Activated naive CD4-positive, alpha-beta T cell treated with anti-CD3 and anti-CD28 coated beads for 36 hours (primary cell): ENCODE measurements at regions of chr3 and their contacts with region 1.

Region 1: GRCh38 chr3:113531826-113532697 is at the start of gene SIDT1:
- DNase-seq: peak; percentile 82
- H3K4me3 Mint-ChIP-seq: peak within 1 kb of the TSS; percentile 97
- H3K27ac Mint-ChIP-seq: peak within 1 kb of the TSS; percentile 96
- H3K4me1 Mint-ChIP-seq: peaks cover 46% of the 10 kb centered on the region
- H3K27me3 Mint-ChIP-seq: no peaks in the 10 kb centered on the region
- total RNA-seq, gene SIDT1: 14.6 to 14.9 TPM

Region 2: DNA sequence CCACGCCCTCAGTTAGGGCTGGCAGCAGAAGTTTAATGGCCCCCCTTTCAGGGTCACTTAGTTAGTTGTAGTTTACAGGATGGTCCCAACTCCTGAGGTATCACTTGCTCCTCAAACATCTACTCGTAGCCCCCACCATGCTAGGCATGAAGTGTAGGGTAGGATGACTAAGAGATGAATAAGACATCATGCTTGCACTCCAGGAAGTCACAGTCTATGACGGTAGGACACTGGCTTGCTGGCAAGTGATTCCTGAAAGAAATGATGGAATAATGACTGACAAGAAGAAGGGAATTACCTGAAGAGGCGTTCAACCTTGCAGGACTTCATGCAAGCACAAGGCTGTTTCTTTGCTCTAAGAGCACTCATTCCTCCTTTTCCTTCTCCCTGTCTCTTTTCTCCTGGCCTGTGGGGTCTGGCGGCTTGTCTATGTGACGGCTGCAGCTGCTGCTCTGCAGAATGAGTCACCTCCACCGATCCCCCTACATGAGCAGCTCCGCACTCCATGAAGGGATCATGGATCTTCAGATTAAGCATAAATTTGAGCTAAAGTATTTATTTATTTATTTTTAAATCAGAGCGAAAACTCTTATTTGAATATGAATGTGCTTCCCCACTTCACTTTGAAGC is 403.6 kb before region 1 on chr3:
- CTCF ChIA-PET with region 1: no interaction called
- intact Hi-C with region 1: no loop called
- DNase-seq: no peak
- H3K4me3 Mint-ChIP-seq: no peak overlapping the region
- H3K27ac Mint-ChIP-seq: no peak overlapping the region
- H3K4me1 Mint-ChIP-seq: peaks cover 2% of the 10 kb centered on the region
- H3K27me3 Mint-ChIP-seq: no peaks in the 10 kb centered on the region

Region 3: DNA sequence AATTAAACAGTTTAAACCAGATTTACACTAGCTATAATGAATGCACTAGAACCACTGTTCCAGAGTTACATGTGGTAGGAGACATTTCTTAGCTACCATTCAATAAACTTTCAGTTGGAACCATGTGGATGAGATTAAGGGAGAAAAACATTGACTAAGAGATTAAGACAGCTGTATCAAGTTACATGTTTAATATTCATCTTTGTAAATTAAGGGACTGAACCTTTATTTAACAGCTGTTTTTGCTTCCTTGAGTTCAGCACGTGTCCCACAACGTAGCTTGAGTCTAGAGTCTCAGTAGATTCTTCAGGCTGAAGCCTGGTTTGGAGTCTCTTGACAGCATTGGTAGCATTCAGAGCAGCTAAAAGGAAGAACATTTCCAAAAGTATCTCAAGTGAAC is 63.5 kb before region 1 on chr3:
- CTCF ChIA-PET with region 1: no interaction called
- intact Hi-C with region 1: no loop called
- DNase-seq: no peak
- H3K4me3 Mint-ChIP-seq: no peak overlapping the region
- H3K27ac Mint-ChIP-seq: no peak overlapping the region
- H3K4me1 Mint-ChIP-seq: no peaks in the 10 kb centered on the region
- H3K27me3 Mint-ChIP-seq: no peaks in the 10 kb centered on the region

Region 4: GRCh38 chr3:113514265-113514769 is 17.7 kb before region 1 on chr3:
- CTCF ChIA-PET with region 1: interaction called, 4 read pairs
- intact Hi-C with region 1: loop called (anchors 1 kb)
- DNase-seq: no peak
- H3K4me3 Mint-ChIP-seq: no peak overlapping the region
- H3K27ac Mint-ChIP-seq: no peak overlapping the region
- H3K4me1 Mint-ChIP-seq: peaks cover 12% of the 10 kb centered on the region
- H3K27me3 Mint-ChIP-seq: peaks cover 12% of the 10 kb centered on the region

Region 5: DNA sequence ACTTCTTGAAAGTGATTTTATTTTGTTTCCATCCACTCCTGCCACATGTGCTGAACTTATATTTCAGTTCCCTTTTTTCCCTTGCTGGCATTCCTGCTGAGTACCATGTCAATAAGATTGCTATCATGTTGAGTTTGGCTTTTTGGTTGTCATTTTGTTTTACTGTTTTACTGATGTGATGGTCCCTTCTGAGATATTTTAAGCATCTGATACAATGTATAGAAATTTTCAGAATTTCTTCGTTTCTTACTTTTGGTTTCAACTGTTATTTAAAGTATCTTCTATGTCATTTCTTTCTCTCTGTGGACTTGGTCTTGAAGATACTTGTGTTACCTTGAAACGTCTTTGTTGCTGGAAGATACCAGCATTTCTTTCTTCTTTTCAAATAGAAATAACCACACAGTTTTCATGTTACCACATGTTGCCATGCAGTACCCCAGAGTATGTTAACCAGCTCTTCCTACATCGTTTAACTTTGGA is 14.4 kb after region 1 on chr3:
- CTCF ChIA-PET with region 1: interaction called, 4 read pairs
- intact Hi-C with region 1: loop called (anchors 1 kb)
- DNase-seq: no peak
- H3K4me3 Mint-ChIP-seq: peak overlapping the region; percentile 62
- H3K27ac Mint-ChIP-seq: peak overlapping the region; percentile 64
- H3K4me1 Mint-ChIP-seq: peaks cover 32% of the 10 kb centered on the region
- H3K27me3 Mint-ChIP-seq: no peaks in the 10 kb centered on the region

Region 6: DNA sequence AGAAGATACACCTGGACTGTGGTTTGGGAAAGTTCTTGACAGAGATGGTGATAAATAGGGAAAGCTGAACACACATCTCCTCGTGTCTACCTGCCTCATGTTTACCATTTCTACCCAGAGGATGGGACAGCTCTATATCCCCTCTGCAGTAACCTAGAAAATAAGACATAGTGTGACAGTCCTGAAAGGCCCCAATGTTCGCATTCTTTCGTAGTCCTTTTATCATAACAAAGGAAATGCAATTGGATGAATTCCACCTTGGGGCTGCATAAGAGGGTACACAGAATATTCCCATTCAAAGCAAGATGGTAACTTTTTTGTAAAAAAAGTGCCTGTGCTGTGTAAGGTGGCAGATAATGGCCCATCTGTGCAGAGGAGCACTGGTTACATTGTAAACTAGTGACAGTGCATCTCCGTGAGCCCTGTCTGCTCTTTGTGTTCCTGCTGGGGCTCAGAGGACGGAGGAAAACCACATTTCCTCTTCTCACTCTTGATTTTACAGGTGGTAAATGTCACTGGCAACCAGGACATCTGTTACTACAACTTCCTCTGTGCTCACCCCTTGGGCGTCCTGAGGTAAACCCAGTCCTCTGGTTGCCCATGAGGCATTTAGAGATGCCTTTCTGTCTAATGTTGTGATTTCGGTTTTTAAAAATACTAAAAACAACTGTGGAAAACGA is 74.6 kb after region 1 on chr3:
- CTCF ChIA-PET with region 1: no interaction called
- intact Hi-C with region 1: loop called (anchors 1 kb)
- DNase-seq: peak; percentile 74
- H3K4me3 Mint-ChIP-seq: peak overlapping the region; percentile 27
- H3K27ac Mint-ChIP-seq: peak overlapping the region; percentile 46
- H3K4me1 Mint-ChIP-seq: peaks cover 21% of the 10 kb centered on the region
- H3K27me3 Mint-ChIP-seq: no peaks in the 10 kb centered on the region